OCI-LY7 (cell line): ENCODE measurements at regions of chr6 and their contacts with region 1.

Region 1: DNA sequence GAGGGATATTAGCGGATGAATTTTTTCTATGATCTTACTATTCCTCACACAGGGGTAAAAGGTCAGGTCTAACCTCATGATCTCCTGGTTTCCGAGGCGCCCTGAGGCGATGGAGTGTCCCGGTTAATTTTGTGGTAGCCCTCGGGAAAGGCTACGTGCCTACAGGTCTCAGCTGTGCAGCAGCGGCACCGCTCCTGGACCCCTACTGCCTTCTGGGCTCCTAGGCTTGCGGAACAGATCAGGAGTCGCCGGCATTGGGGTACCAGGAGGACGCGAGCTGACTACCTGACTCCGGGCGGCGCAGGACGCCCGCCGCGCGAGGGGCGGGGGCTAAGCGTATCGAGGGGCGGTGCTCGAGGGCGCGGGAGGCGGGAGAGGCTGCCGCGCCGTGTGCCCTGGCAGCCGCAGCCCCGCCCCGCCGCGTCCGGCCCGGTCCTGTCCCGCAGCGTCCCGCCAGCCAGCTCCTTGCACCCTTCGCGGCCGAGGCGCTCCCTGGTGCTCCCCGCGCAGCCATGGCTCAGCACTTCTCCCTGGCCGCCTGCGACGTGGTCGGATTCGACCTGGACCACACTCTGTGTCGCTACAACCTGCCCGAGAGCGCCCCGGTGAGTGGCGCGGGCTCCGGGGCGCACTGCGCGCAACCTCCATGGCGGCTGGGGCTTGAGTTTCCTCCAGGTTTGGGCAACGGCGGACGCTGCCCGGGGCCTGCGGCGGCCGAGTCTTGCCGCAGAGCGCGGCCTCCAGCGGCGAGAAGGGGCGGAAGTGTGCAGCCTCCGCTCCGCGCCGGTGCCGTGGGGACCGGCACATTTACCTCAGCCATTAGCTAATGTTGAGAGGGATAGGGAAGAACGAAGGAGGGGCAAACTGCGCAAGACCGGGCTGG is at the start of gene NT5DC1:
- DNase-seq: peak; percentile 90
- H3K4me3 ChIP-seq: peak within 1 kb of the TSS; percentile 78
- H3K27ac ChIP-seq: peak within 1 kb of the TSS; percentile 82
- H3K4me1 ChIP-seq: peaks cover 37% of the 10 kb centered on the region
- CTCF ChIP-seq: peak; percentile 57
- total RNA-seq, gene NT5DC1: 11.3 and 20.5 TPM in 2 replicates

Region 2: GRCh38 chr6:116010790-116011401 is 89.8 kb before region 1 on chr6:
- CTCF ChIA-PET with region 1: interaction called, 6 read pairs
- POLR2A ChIA-PET with region 1: interaction called, 9 read pairs
- intact Hi-C with region 1: loop called (anchors 1 kb)
- DNase-seq: peak; percentile 67
- H3K4me3 ChIP-seq: no peak overlapping the region
- H3K27ac ChIP-seq: no peak overlapping the region
- H3K4me1 ChIP-seq: peaks cover 8% of the 10 kb centered on the region
- CTCF ChIP-seq: peak; percentile 93

Region 3: DNA sequence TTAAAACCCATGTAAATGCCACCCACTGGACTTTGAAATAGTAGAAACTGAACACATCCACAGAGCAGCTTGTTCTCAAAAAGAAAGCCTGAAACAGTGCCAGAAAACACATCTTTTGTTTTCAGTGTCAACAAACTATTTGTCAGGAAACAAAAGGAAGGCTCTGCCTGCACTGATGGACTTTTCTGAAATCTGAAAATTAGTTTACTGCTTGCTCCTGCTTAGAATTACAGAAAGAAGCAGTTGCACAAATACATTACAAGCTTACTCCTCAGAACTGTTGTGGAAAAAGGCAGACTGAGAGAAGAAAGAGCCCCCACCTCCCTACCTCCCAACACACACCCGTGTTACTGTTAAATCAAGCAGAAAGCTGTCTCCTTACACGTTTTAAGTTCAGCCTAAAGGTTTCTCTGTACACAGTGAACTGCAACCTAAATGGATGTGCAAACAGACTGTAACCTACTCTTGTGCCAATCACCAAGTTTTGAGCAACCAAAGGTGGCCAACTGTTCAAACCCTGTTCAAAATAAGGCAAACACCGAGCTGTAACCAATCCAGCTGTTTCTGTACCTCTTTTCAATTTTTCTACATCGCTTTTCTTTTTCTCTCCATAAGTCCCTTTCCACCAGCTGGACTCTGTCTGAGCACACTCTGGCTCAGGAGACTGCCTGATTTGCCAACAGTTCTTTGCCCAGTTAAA is 83.7 kb before region 1 on chr6:
- CTCF ChIA-PET with region 1: interaction called, 4 read pairs
- POLR2A ChIA-PET with region 1: interaction called, 12 read pairs
- intact Hi-C with region 1: loop called (anchors 2 kb)
- DNase-seq: no peak
- H3K4me3 ChIP-seq: no peak overlapping the region
- H3K27ac ChIP-seq: no peak overlapping the region
- H3K4me1 ChIP-seq: peaks cover 43% of the 10 kb centered on the region
- CTCF ChIP-seq: no peak

Region 4: GRCh38 chr6:116111552-116112528 is 11.2 kb after region 1 on chr6:
- CTCF ChIA-PET with region 1: interaction called, 10 read pairs
- POLR2A ChIA-PET with region 1: interaction called, 7 read pairs
- intact Hi-C with region 1: no loop called
- DNase-seq: peak; percentile 47
- H3K4me3 ChIP-seq: no peak overlapping the region
- H3K27ac ChIP-seq: no peak overlapping the region
- H3K4me1 ChIP-seq: no peaks in the 10 kb centered on the region
- CTCF ChIP-seq: peak; percentile 89

Region 5: DNA sequence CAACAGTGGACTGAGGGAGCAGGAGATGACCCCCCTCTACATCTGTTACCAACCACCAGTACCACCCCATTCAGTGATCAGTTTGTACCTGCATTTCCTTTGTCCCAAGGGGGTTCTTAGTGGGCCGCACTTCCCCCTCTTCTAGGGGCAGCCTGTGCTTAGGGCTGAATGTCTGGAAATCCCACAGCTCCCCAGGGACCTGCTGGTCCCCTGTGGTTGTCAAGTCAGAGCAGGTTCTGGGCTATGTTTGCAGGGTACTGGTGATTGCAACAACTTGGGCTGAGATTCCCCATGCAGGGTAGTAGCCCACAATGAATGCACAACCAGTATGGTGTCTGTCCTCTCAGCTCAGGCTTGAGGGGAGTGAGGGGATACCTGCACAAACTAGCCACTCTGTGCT is 64.9 kb after region 1 on chr6:
- CTCF ChIA-PET with region 1: no interaction called
- POLR2A ChIA-PET with region 1: no interaction called
- intact Hi-C with region 1: no loop called
- DNase-seq: peak; percentile 25
- H3K4me3 ChIP-seq: no peak overlapping the region
- H3K27ac ChIP-seq: no peak overlapping the region
- H3K4me1 ChIP-seq: peaks cover 7% of the 10 kb centered on the region
- CTCF ChIP-seq: no peak